Ascending aorta (tissue), 2 donors: ENCODE measurements at regions of chr1 and their contacts with region 1.

Region 1: DNA sequence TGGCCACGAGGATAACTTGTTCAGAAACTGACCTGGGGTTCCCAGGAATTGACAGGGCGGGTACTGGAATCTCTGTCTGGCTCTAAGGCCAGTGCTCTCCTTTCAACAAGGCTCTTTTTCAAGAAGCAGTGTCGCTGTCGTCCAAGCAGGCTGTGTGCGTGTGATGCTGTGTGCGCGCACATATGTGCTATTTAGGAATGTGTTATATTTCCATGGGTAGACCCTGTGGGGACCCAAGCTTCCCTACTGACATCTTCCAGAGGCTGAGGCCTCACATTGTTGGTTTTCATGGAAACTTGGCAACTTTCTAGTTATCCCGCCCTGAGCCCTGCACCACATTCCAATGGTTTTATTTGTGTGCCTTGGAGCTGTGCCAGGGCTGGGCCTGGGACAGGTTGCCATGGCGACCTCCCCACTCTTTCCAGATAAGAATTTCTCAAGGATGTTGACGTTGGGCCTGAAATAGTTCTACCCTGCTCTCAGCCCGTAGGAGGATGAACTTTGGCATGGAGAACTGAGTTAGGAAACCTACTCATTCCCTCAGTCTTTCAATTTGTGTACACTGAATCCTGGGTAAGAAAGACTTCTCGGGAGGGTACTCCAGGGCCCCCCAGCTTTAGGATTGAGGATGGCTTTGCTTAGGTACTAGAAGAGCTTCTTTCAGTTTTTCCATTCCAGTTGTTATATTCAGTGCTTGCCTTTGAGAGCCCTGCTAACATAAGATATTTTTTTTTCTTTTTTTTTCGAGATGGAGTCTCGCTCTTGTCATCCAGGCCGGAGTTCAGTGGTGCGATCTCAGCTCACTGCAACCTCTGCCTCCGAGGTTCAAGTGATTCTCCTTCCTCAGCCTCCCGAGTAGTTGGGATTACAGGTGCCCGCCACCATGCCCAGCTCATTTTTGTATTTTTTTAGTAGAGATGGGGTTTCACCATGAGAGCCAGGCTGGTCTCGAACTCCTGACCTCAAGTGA is 38.8 kb upstream of the SRSF10 start:
- DNase-seq: peak; percentile 83 to 99
- H3K4me3 ChIP-seq: peak overlapping the region in 1 of 2 donors; percentile 34
- H3K27ac ChIP-seq: peak overlapping the region; percentile 89 to 91
- H3K4me1 ChIP-seq: peaks cover 30 to 80% of the 10 kb centered on the region in 2 donors
- H3K27me3 ChIP-seq: no peaks in the 10 kb centered on the region
- CTCF ChIP-seq: no peak

Region 2: GRCh38 chr1:23979878-23980724 is 38.8 kb before region 1 on chr1 and contains the start of gene SRSF10:
- intact Hi-C with region 1: loop called (anchors 2 kb)
- DNase-seq: peak; percentile 92 to 99
- H3K4me3 ChIP-seq: peak within 1 kb of the TSS; percentile 90 to 91
- H3K27ac ChIP-seq: peak within 1 kb of the TSS; percentile 96 to 98
- H3K4me1 ChIP-seq: peaks cover 3 to 32% of the 10 kb centered on the region in 2 donors
- H3K27me3 ChIP-seq: no peaks in the 10 kb centered on the region
- CTCF ChIP-seq: peak in 2 of 3 experiments; percentile 35 to 44
- total RNA-seq, gene SRSF10: 80.6 TPM

Region 3: DNA sequence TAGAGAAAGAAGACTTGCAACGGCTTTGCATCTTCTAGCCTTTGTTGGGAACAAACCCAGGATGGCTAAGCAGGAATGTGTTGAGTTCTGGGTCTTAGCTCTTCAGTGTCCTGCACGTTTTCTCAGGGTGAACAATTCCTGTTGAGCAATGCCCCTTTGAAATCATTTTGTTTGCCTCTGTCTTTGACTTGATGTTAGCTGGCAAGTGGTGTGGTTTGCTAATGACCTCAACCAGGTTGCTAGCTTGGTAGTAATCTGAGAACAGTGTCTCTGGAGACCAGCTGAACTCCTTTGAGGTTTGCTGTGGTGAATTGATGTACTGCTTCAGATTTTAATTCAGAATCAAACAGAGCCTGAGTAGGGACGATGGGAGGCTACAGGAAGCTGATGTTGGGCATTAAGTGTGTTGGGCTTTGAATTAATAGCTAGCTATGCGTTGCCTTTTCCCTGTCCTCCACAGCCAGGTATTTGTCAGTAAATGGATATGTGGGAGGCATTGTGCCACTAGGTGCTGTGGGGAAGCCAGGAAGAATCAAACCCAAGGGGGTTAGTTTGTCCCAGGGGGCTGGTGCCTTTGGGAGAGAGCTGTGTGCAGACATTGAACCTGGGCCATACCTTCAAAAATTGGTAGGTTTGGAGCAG is 15.4 kb before region 1 on chr1:
- intact Hi-C with region 1: loop called (anchors 1 kb)
- DNase-seq: peak in 1 of 2 donors; percentile 63
- H3K4me3 ChIP-seq: no peak overlapping the region
- H3K27ac ChIP-seq: peak overlapping the region in 1 of 2 donors; percentile 39
- H3K4me1 ChIP-seq: peaks cover 0 to 24% of the 10 kb centered on the region in 2 donors
- H3K27me3 ChIP-seq: no peaks in the 10 kb centered on the region
- CTCF ChIP-seq: no peak